ENCODE measurements at regions of chr11 and their contacts with region 1.

Region 1: DNA sequence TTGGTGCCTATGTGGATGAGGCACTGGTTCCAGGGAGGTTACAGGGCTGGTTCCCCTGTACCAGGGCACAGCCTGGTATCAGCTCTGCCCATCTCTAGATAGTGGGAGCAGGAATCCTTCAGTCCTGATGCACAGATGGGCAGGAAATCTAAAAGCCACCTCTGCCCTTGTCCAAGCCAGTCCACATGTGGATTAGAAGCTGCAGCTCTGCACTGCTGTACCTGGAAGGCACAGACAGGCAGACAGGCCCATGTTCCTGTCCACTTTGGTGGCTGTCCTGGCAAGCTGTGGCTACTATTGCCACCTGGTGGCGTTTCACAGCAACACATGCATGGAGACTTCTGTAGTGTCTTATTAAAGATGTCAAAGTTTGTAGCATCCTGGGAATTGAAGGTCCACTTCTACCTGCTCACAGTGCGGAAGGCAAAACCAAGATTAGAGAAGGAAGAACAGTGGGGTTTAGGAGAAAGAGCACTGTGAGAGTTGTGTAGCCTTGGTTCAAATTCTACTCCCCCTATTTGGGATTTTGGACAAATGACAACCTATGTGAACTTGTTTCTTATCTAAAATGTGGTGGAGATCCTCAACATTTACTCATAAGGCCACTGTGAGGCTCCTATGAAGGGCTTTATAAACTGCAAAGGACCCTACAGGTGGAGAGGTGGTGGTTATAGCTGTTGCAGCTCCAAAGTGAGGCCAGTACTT is 30.1 kb downstream of the NAV2 start:
- DNase-seq: peak; percentile 80 to 96 (median 86)
- H3K4me3 ChIP-seq: no peak overlapping the region
- H3K27ac ChIP-seq: no peak overlapping the region
- H3K4me1 ChIP-seq: peaks cover 0 to 6% of the 10 kb centered on the region in 2 donors
- H3K27me3 ChIP-seq: no peaks in the 10 kb centered on the region
- CTCF ChIP-seq: peak; percentile 87 to 99 (median 96)
- POLR2A ChIP-seq: no peak

Region 2: DNA sequence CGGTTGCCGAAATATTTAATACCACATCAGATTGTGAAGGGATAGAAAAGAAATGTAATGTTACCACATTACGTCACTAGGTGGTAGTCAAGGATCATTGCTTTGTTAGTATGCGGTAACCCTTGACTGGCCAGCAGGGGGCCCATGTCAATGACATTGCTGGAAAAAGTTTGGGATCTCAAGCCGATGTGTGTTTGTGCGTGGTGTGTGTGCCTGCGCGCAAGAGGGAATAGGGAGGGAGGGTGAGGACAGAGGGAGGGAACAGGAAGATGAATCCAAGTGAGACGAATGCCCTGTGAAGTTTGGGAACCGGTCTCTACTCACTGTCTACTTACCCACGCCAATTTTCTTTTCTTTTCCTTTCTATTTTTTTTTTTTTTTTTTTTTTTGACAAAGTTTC is 671.5 kb before region 1 on chr11:
- intact Hi-C with region 1: loop called in 1 of 2 experiments (anchors 10 kb)
- DNase-seq: peak; percentile 68 to 89 (median 80)
- H3K4me3 ChIP-seq: no peak overlapping the region
- H3K27ac ChIP-seq: no peak overlapping the region
- H3K4me1 ChIP-seq: no peaks in the 10 kb centered on the region
- H3K27me3 ChIP-seq: no peaks in the 10 kb centered on the region
- CTCF ChIP-seq: peak; percentile 70 to 100 (median 94)
- POLR2A ChIP-seq: no peak

Region 3: DNA sequence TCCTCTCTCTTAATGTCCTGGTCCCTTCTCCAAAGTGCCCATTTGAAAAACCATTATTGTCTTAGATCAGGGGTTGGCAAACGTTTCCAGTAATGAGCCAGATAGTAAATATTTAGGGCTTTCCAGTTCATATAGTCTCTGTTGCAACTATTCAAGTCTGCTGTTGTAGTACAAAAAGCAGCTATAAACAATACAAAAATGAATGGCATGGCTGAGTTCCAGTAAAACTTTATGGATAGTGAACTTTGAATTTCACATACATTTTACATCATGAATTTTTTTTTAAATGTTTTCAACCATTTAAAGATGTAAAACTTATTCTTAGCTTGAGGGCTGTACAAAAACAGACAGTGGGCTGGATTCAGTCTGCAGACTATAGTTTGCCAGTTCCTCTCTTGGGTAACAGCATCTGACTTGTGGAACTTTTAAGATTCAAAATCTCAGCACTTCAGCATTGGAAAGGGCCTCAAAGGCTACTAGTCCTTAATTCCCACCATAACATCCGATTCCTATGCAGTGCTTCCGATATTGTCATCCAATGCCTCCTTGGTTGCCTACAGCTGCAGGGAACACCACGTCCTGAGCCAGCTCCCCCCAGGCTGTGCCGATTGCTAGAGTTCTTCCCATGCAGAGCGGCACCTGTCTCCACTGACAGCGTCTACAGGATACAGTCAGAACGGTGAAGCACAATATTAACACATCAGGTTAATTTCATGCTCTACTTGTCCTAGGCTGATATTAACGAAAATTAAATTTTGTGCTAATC is 436.4 kb before region 1 on chr11:
- intact Hi-C with region 1: loop called in 1 of 2 experiments (anchors 10 kb)
- DNase-seq: peak in 1 of 7 donors; percentile 60
- H3K4me3 ChIP-seq: no peak overlapping the region
- H3K27ac ChIP-seq: no peak overlapping the region
- H3K4me1 ChIP-seq: no peaks in the 10 kb centered on the region
- H3K27me3 ChIP-seq: no peaks in the 10 kb centered on the region
- CTCF ChIP-seq: no peak
- POLR2A ChIP-seq: no peak

Region 4: GRCh38 chr11:19561011-19561410 is 181.7 kb before region 1 on chr11:
- intact Hi-C with region 1: loop called (anchors 2 kb)
- DNase-seq: no peak
- H3K4me3 ChIP-seq: no peak overlapping the region
- H3K27ac ChIP-seq: no peak overlapping the region
- H3K4me1 ChIP-seq: no peaks in the 10 kb centered on the region
- H3K27me3 ChIP-seq: no peaks in the 10 kb centered on the region
- CTCF ChIP-seq: no peak
- POLR2A ChIP-seq: no peak

Region 5: DNA sequence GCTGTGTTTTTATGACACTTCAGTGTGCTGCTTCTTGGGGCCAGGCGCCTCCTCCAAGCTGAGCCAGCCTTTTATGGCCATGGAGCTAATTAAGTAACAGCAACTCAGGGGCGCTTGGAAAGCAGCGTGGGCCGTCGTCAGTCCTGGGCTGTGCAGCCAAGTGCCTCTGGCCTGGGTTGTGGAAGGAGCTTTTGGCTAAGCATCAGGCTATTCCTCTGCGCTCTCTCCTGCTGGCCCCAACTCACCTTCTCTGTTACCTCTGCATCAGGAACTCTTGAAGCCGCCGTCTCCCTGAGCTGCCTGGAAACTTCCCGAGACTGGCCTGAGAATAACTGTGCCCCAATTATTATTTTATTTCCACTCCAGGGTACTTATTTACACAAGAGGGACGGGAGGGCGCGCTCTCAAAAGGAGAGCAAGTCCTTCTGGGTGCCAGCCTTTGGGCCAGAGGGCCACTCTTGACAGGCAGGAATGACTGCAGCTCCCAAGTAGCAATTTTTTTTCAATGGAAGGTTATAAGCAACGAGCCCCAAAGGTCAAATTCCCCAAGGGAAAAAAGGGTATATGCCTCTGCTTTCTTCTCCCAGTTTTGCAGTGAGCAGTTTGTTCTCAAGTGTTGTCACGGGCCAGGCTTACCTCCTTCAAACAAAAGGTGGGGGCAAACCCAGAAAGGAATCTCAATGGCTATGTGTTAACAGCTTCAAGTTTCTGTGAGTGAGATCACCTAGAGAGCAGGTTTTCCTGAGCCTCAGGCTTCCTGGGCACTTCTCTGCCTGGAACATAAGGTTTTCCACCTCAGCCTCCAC is 68.6 kb before region 1 on chr11:
- intact Hi-C with region 1: no loop called
- DNase-seq: peak in 4 of 7 donors; percentile 11 to 71 (median 38)
- H3K4me3 ChIP-seq: no peak overlapping the region
- H3K27ac ChIP-seq: no peak overlapping the region
- H3K4me1 ChIP-seq: no peaks in the 10 kb centered on the region
- H3K27me3 ChIP-seq: no peaks in the 10 kb centered on the region
- CTCF ChIP-seq: no peak
- POLR2A ChIP-seq: no peak

Region 6: DNA sequence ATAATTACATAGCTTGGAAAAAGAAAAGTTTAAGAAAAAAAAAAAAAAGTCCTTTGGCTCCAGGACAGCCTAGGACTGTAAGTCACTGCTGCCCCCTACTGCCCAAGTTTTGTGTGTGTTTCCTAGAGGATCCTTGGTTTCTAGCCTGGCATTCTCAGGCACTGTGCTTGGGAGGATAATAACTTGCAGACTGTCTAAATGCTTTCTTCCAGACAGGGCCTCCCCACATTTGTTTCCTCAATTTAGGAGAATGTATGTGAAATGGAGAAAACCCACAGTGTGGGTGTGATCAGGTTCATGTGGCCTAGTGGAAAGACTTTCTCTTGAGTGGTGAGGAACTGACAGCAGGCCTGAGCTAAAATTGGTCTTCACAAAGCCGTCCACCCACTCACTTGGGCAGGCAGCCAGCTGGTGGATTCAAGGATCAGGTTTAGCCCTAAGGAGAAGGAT is 160.9 kb after region 1 on chr11:
- intact Hi-C with region 1: loop called (anchors 2 to 10 kb)
- DNase-seq: peak; percentile 71 to 93 (median 83)
- H3K4me3 ChIP-seq: no peak overlapping the region
- H3K27ac ChIP-seq: no peak overlapping the region
- H3K4me1 ChIP-seq: peaks cover 0 to 9% of the 10 kb centered on the region in 2 donors
- H3K27me3 ChIP-seq: no peaks in the 10 kb centered on the region
- CTCF ChIP-seq: peak; percentile 64 to 80 (median 74)
- POLR2A ChIP-seq: no peak

Region 7: DNA sequence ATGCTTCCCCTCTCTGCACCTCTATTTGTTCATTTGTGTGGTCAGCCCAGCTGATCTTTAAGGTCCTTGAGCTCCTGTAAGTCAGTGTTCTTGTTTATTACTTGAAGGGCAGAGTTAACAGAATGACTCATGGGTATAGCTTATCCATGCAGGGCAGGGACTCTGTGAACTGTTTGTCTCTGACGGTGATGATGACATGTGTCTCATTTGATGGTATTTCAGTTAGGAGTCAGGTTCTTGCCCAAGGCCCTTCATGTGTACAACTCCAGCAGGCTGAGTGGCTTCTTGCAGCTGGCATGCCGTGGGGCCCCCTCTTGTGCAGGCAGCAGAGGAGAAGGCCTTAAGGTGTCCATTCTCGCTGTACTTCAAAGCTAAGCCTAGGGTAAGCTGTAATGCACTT is 252.4 kb after region 1 on chr11:
- intact Hi-C with region 1: no loop called
- DNase-seq: peak in 6 of 7 donors; percentile 24 to 59 (median 36)
- H3K4me3 ChIP-seq: no peak overlapping the region
- H3K27ac ChIP-seq: peak overlapping the region in 2 of 5 donors; percentile 29 to 38
- H3K4me1 ChIP-seq: peaks cover 0 to 18% of the 10 kb centered on the region in 2 donors
- H3K27me3 ChIP-seq: no peaks in the 10 kb centered on the region
- CTCF ChIP-seq: no peak
- POLR2A ChIP-seq: no peak